Heart left ventricle (tissue), 16 donors: ENCODE measurements at regions of chr9 and their contacts with region 1.

Region 1: DNA sequence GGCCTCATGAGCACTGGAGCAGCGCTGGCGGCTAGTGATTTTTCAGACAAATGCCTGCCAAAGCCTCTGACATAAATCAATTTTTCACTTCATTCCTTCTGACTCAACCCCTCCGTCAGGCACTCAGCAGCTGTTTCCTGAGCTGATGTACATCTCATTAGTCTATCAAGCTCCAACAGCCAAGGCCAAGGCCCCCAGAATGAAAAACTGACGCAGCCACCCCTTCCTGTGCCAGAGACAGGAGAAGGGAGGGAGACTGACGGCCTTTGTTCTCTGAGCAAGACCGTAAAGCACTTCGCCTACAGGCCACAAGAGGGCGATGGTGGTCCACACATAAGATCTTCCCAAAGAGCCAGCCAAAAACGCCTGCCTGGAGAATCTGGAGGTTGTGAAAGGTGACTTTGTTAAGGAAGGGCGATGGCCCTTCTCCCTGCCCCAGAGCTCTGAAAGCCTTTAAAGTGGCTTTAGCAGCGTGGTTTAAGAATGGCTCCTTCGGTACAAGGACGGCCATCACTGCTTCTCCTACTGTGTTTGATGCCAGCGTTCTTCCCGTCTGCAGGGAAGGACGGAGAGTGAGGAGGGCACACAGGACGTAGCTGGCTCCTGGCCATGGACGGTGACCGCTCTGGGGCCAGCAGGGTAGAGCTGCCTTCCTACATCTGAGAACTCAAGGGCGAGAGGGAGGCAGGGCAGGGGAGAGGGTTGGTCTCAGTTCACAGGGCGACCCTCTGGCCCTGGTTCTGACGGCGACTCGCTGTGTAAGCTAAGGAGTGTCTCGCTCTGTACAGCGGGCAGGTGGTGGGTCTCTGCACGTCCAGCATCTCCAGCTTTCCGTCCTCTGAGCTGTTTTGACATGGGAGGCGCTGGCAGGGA is 37.0 kb downstream of the ALG2 start:
- DNase-seq: peak; percentile 82 to 89 (median 86)
- ATAC-seq: peak; percentile 82 to 94 (median 90)
- H3K4me3 ChIP-seq: peak overlapping the region in 9 of 12 donors; percentile 14 to 46 (median 37)
- H3K27ac ChIP-seq: peak overlapping the region in 7 of 12 donors; percentile 10 to 51 (median 32)
- H3K4me1 ChIP-seq: peaks cover 0 to 19% (median 6%) of the 10 kb centered on the region in 12 donors
- H3K27me3 ChIP-seq: peaks cover 0 to 4% (median 0%) of the 10 kb centered on the region in 9 donors
- CTCF ChIP-seq: peak; percentile 89 to 98 (median 93)
- POLR2A ChIP-seq: no peak

Region 2: GRCh38 chr9:99118782-99119466 is 65.8 kb before region 1 on chr9:
- intact Hi-C with region 1: no loop called
- DNase-seq: no peak
- ATAC-seq: peak in 3 of 4 donors; percentile 37 to 80 (median 47)
- H3K4me3 ChIP-seq: no peak overlapping the region
- H3K27ac ChIP-seq: peak overlapping the region in 1 of 12 donors; percentile 43
- H3K4me1 ChIP-seq: peaks cover 0 to 74% (median 41%) of the 10 kb centered on the region in 12 donors
- H3K27me3 ChIP-seq: no peaks in the 10 kb centered on the region
- CTCF ChIP-seq: no peak
- POLR2A ChIP-seq: no peak

Region 3: GRCh38 chr9:99140685-99141314 is 43.9 kb before region 1 on chr9:
- intact Hi-C with region 1: no loop called
- DNase-seq: peak in 4 of 5 donors; percentile 31 to 49 (median 36)
- ATAC-seq: peak in 3 of 4 donors; percentile 85 to 90 (median 89)
- H3K4me3 ChIP-seq: no peak overlapping the region
- H3K27ac ChIP-seq: peak overlapping the region in 3 of 12 donors; percentile 10 to 48 (median 23)
- H3K4me1 ChIP-seq: peaks cover 0 to 47% (median 6%) of the 10 kb centered on the region in 12 donors
- H3K27me3 ChIP-seq: no peaks in the 10 kb centered on the region
- CTCF ChIP-seq: peak; percentile 75 to 95 (median 88)
- POLR2A ChIP-seq: no peak

Region 4: GRCh38 chr9:99266255-99267023 is 81.7 kb after region 1 on chr9:
- intact Hi-C with region 1: loop called in 2 of 10 experiments (anchors 5 to 10 kb)
- DNase-seq: peak; percentile 63 to 79 (median 66)
- ATAC-seq: peak; percentile 55 to 88 (median 82)
- H3K4me3 ChIP-seq: no peak overlapping the region
- H3K27ac ChIP-seq: no peak overlapping the region
- H3K4me1 ChIP-seq: peaks cover 0 to 10% (median 2%) of the 10 kb centered on the region in 12 donors
- H3K27me3 ChIP-seq: no peaks in the 10 kb centered on the region
- CTCF ChIP-seq: peak; percentile 65 to 90 (median 78)
- POLR2A ChIP-seq: no peak

Region 5: DNA sequence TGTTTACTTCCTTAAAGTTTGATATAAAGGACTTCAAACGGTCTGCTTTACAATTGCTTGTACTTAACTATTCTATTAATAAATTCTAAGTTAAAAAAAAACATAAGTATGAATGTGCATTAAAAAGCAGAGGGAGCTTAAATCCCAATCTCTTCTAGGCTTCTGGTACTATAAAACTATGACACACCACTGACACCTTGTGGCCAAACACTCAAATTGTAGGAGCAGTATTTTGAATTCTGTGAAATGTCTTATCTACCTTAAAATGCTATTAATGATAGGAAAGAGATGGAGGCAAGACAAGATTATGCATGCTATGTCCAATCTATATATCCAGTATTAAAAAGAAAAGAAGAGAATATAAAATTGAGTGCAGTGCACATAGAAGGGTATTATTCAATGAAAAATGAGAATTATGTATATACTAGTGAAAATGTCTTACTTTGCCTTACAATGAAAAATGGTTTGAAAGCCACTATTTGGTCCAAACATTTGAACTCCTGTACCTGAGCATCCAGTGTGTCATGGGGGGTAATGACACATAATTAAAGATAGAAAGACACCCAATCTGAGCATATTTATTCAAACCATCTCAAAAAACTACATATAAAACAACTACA is 826.5 kb after region 1 on chr9:
- intact Hi-C with region 1: loop called in 2 of 10 experiments (anchors 5 to 10 kb)
- DNase-seq: no peak
- ATAC-seq: no peak
- H3K4me3 ChIP-seq: no peak overlapping the region
- H3K27ac ChIP-seq: no peak overlapping the region
- H3K4me1 ChIP-seq: no peaks in the 10 kb centered on the region
- H3K27me3 ChIP-seq: no peaks in the 10 kb centered on the region
- CTCF ChIP-seq: peak; percentile 19 to 62 (median 48)
- POLR2A ChIP-seq: no peak

Region 6: DNA sequence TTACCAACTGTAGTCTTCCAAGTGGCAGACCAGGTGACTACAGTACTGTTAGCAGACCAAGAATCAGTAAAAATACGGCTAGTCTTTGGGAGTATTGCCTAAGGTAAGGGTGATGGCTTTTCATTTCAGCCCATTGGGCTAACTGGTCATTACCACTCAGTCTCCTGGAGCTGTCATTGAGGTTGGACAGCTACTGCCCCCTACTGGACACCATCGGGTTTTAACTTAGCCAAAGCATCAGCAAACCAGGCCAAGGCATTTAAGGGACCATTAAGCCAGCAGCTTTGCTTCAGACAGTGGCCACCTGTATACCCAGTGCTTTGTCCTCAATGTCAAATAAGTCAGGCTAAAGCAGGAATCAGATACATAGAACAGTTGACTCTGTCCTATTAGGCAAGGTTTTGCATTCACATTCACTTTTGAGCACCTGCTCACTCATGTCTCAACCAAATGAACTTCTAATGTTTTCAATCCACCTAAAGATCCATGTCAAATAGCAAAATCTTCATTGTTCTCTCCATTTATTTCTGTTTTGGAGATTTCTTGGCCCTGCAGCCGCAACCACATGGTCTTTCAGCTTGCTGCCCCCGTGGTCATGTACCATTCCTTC is 1031.6 kb after region 1 on chr9:
- intact Hi-C with region 1: loop called in 3 of 10 experiments (anchors 10 kb)
- DNase-seq: peak in 4 of 5 donors; percentile 27 to 50 (median 36)
- ATAC-seq: peak in 3 of 4 donors; percentile 55 to 62 (median 61)
- H3K4me3 ChIP-seq: no peak overlapping the region
- H3K27ac ChIP-seq: no peak overlapping the region
- H3K4me1 ChIP-seq: peaks cover 0 to 7% (median 0%) of the 10 kb centered on the region in 12 donors
- H3K27me3 ChIP-seq: no peaks in the 10 kb centered on the region
- CTCF ChIP-seq: peak; percentile 42 to 70 (median 63)
- POLR2A ChIP-seq: no peak

Region 7: GRCh38 chr9:100222674-100223073 is 1038.0 kb after region 1 on chr9:
- intact Hi-C with region 1: loop called in 3 of 10 experiments (anchors 10 kb)
- DNase-seq: no peak
- ATAC-seq: no peak
- H3K4me3 ChIP-seq: no peak overlapping the region
- H3K27ac ChIP-seq: no peak overlapping the region
- H3K4me1 ChIP-seq: peaks cover 0 to 17% (median 0%) of the 10 kb centered on the region in 12 donors
- H3K27me3 ChIP-seq: no peaks in the 10 kb centered on the region
- CTCF ChIP-seq: peak in 9 of 12 donors; percentile 9 to 59 (median 38)
- POLR2A ChIP-seq: no peak

Region 8: GRCh38 chr9:100322954-100323536 is 1138.3 kb after region 1 on chr9:
- intact Hi-C with region 1: loop called in 6 of 10 experiments (anchors 5 to 10 kb)
- DNase-seq: no peak
- ATAC-seq: no peak
- H3K4me3 ChIP-seq: no peak overlapping the region
- H3K27ac ChIP-seq: no peak overlapping the region
- H3K4me1 ChIP-seq: peaks cover 0 to 6% (median 0%) of the 10 kb centered on the region in 12 donors
- H3K27me3 ChIP-seq: no peaks in the 10 kb centered on the region
- CTCF ChIP-seq: peak; percentile 46 to 75 (median 62)
- POLR2A ChIP-seq: no peak